GM12878 (cell line): ENCODE measurements at regions of chr11 and their contacts with region 1.

Region 1: DNA sequence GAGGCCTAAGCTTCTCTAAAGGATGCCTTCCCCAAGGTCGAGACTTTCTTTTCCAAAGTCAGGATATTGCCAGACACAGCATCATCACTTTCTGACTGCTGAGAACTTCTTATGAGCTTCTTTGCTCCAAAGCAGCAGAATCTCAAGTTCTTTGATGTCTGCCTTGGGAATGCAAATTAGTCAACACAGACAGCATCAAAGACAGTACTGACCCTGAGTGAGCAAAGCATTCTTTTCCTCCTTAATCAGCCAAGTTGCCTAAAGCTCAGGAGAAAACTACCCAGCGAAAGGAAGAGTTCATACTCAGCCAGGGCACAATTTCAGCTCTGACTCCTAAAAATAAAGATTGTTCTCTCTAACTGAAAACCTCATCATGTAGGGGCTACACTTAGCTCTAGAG is 98.0 kb downstream of the SLC36A4 start:
- DNase-seq: no peak
- ATAC-seq: no peak
- H3K4me3 ChIP-seq: no peak overlapping the region
- H3K27ac ChIP-seq: no peak overlapping the region
- H3K4me1 ChIP-seq: no peaks in the 10 kb centered on the region
- H3K27me3 ChIP-seq: no peaks in the 10 kb centered on the region
- CTCF ChIP-seq: no peak
- EP300 ChIP-seq: no peak
- POLR2A ChIP-seq: no peak
- RAD21 ChIP-seq: no peak

Region 2: GRCh38 chr11:93089474-93090102 is 10.2 kb before region 1 on chr11:
- CTCF ChIA-PET with region 1: no interaction called
- POLR2A ChIA-PET with region 1: interaction called, 10 read pairs
- RAD21 ChIA-PET with region 1: no interaction called
- SMC1A ChIA-PET with region 1: interaction called, 3 read pairs
- in situ Hi-C with region 1: no loop called
- intact Hi-C with region 1: no loop called
- DNase-seq: no peak
- ATAC-seq: peak; percentile 79
- H3K4me3 ChIP-seq: no peak overlapping the region
- H3K27ac ChIP-seq: no peak overlapping the region
- H3K4me1 ChIP-seq: no peaks in the 10 kb centered on the region
- H3K27me3 ChIP-seq: no peaks in the 10 kb centered on the region; a peak in 1 of 4 replicates
- CTCF ChIP-seq: peak; percentile 46 to 53 (median 48)
- EP300 ChIP-seq: no peak
- POLR2A ChIP-seq: no peak
- RAD21 ChIP-seq: peak; percentile 47; the same call in 1 of the 2 replicates

Region 3: DNA sequence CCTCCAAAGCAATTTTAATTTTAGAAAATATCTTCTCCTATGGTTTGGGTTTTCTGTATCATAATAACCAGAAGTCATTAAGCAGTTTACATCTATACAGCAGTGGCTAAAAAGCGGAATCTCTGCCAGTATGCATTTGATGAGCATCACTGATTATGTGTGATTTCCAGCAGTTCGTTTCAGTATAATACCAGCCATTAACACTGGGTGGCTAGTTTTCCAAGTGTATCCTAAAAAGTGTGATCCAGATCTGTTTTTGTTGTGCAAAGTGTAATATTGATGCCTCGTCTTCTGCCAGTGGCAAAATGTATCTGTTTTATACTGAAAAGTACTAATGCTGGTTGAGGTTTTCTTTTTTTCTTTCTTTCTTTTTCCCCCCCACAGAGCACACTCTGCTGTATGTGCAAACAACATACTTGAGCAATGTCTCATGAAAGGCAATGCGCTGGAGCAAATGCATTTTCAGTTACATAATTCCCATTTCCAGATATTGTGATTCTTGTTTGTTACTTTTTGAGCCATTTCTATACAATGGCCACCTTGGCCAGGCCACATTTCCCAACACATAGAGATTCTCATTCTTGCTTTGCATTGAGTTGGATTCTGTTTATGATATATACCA is 33.8 kb after region 1 on chr11:
- CTCF ChIA-PET with region 1: no interaction called
- POLR2A ChIA-PET with region 1: no interaction called
- RAD21 ChIA-PET with region 1: no interaction called
- SMC1A ChIA-PET with region 1: no interaction called
- in situ Hi-C with region 1: no loop called
- intact Hi-C with region 1: no loop called
- DNase-seq: no peak
- ATAC-seq: no peak
- H3K4me3 ChIP-seq: no peak overlapping the region
- H3K27ac ChIP-seq: no peak overlapping the region
- H3K4me1 ChIP-seq: no peaks in the 10 kb centered on the region
- H3K27me3 ChIP-seq: no peaks in the 10 kb centered on the region
- CTCF ChIP-seq: no peak
- EP300 ChIP-seq: no peak
- POLR2A ChIP-seq: no peak
- RAD21 ChIP-seq: no peak

Region 4: DNA sequence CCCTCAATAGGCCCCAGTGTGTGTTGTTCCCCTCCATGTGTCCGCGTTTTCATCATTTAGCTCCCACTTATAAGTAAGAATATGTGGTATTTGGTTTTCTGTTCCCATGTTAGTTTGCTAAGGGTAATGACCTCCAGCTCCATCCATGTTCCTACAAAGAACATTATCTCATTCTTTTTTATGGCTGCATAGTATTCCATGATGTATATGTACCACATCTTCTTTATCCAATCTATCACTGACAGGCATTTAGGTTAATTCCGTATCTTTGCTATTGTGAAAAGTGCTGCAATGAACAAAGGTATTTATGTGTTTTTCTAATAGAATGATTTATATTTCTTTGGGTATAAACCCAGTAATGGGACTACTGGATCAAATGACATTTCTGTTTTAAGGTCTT is 55.9 kb after region 1 on chr11:
- CTCF ChIA-PET with region 1: no interaction called
- POLR2A ChIA-PET with region 1: no interaction called
- RAD21 ChIA-PET with region 1: no interaction called
- SMC1A ChIA-PET with region 1: no interaction called
- in situ Hi-C with region 1: no loop called
- intact Hi-C with region 1: no loop called
- DNase-seq: no peak
- ATAC-seq: no peak
- H3K4me3 ChIP-seq: no peak overlapping the region
- H3K27ac ChIP-seq: no peak overlapping the region
- H3K4me1 ChIP-seq: no peaks in the 10 kb centered on the region
- H3K27me3 ChIP-seq: no peaks in the 10 kb centered on the region
- CTCF ChIP-seq: no peak
- EP300 ChIP-seq: no peak
- POLR2A ChIP-seq: no peak
- RAD21 ChIP-seq: no peak

Region 5: GRCh38 chr11:93225662-93226061 is 125.9 kb after region 1 on chr11:
- CTCF ChIA-PET with region 1: no interaction called
- POLR2A ChIA-PET with region 1: no interaction called
- RAD21 ChIA-PET with region 1: no interaction called
- SMC1A ChIA-PET with region 1: no interaction called
- in situ Hi-C with region 1: no loop called
- intact Hi-C with region 1: no loop called
- DNase-seq: no peak
- ATAC-seq: 0 out of 3 replicates have a peak, but pooled peaks have one; percentile 23
- H3K4me3 ChIP-seq: no peak overlapping the region
- H3K27ac ChIP-seq: no peak overlapping the region
- H3K4me1 ChIP-seq: no peaks in the 10 kb centered on the region
- H3K27me3 ChIP-seq: no peaks in the 10 kb centered on the region
- CTCF ChIP-seq: peak in 2 of 3 experiments; percentile 23 to 55; a peak in 3 of 6 replicates
- EP300 ChIP-seq: no peak
- POLR2A ChIP-seq: no peak
- RAD21 ChIP-seq: peak; percentile 41; the same call in 1 of the 2 replicates

Region 6: DNA sequence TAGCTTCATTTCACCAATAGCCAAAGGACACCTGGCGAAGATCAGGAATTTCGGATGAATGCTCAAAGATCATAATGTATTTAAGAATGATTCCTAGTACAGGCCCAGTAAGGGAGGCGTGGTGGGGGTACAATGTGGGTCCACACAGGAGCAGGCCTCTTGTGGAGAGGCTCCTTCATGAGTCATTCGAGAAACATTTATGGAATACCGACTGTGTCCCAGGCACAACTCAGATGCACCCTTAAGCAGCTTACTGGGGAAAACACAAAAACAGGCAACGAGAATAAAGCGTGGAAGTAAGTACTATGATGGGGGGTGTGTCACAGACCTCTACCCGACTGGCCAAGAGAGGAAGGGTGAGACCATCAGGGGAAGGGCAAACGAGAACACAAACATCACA is 398.8 kb after region 1 on chr11:
- CTCF ChIA-PET with region 1: no interaction called
- POLR2A ChIA-PET with region 1: no interaction called
- RAD21 ChIA-PET with region 1: no interaction called
- SMC1A ChIA-PET with region 1: no interaction called
- in situ Hi-C with region 1: no loop called
- intact Hi-C with region 1: no loop called
- DNase-seq: no peak
- ATAC-seq: no peak
- H3K4me3 ChIP-seq: no peak overlapping the region
- H3K27ac ChIP-seq: no peak overlapping the region
- H3K4me1 ChIP-seq: no peaks in the 10 kb centered on the region
- H3K27me3 ChIP-seq: no peaks in the 10 kb centered on the region
- CTCF ChIP-seq: no peak
- EP300 ChIP-seq: no peak
- POLR2A ChIP-seq: no peak
- RAD21 ChIP-seq: no peak